Ascending aorta (tissue), 2 donors: ENCODE measurements at regions of chr4 and their contacts with region 1.

Region 1: GRCh38 chr4:165378745-165379677 is at the start of gene CPE:
- DNase-seq: peak; percentile 23 to 94
- H3K4me3 ChIP-seq: peak within 1 kb of the TSS; percentile 75 to 93
- H3K27ac ChIP-seq: peak within 1 kb of the TSS; percentile 87 to 88
- H3K4me1 ChIP-seq: peaks cover 0 to 11% of the 10 kb centered on the region in 2 donors
- H3K27me3 ChIP-seq: no peaks in the 10 kb centered on the region
- CTCF ChIP-seq: peak; percentile 56 to 67 (median 65)
- total RNA-seq, gene CPE: 199 TPM

Region 2: GRCh38 chr4:165327211-165328100 is 51.6 kb before region 1 on chr4 and contains the start of gene MSMO1:
- intact Hi-C with region 1: loop called (anchors 2 kb)
- DNase-seq: peak; percentile 99 to 100
- H3K4me3 ChIP-seq: peak within 1 kb of the TSS; percentile 72 to 99
- H3K27ac ChIP-seq: peak within 1 kb of the TSS; percentile 65 to 71
- H3K4me1 ChIP-seq: peaks cover 0 to 12% of the 10 kb centered on the region in 2 donors
- H3K27me3 ChIP-seq: no peaks in the 10 kb centered on the region
- CTCF ChIP-seq: no peak
- total RNA-seq, gene MSMO1: 3.6 TPM

Region 3: GRCh38 chr4:165355900-165356300 is 23.1 kb before region 1 on chr4:
- intact Hi-C with region 1: loop called (anchors 2 kb)
- DNase-seq: no peak
- H3K4me3 ChIP-seq: no peak overlapping the region
- H3K27ac ChIP-seq: no peak overlapping the region
- H3K4me1 ChIP-seq: no peaks in the 10 kb centered on the region
- H3K27me3 ChIP-seq: no peaks in the 10 kb centered on the region
- CTCF ChIP-seq: peak; percentile 32 to 57 (median 36)

Region 4: DNA sequence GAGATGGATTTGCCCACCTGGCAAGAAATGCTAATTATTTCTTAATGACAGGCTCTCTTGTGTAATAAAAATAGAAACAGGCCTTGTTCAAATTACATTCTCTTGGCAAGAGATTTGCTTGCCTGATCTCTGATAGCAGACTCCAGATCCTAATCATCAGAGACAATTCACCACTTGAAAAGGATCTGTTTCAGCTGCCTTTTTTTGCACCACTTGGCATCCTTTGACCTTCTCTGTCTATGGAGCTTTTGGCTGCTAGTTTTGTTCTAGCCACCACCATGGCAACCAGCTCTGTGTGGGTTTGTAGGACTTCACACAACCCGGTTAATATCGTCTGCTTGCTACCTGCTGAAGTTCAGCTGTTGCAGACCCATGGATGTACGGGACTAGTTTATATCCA is 252.9 kb after region 1 on chr4:
- intact Hi-C with region 1: no loop called
- DNase-seq: no peak
- H3K4me3 ChIP-seq: no peak overlapping the region
- H3K27ac ChIP-seq: no peak overlapping the region
- H3K4me1 ChIP-seq: no peaks in the 10 kb centered on the region
- H3K27me3 ChIP-seq: no peaks in the 10 kb centered on the region
- CTCF ChIP-seq: no peak